Right ventricle myocardium inferior (tissue), 1 donor: ENCODE measurements at regions of chr14 and their contacts with region 1.

Region 1: DNA sequence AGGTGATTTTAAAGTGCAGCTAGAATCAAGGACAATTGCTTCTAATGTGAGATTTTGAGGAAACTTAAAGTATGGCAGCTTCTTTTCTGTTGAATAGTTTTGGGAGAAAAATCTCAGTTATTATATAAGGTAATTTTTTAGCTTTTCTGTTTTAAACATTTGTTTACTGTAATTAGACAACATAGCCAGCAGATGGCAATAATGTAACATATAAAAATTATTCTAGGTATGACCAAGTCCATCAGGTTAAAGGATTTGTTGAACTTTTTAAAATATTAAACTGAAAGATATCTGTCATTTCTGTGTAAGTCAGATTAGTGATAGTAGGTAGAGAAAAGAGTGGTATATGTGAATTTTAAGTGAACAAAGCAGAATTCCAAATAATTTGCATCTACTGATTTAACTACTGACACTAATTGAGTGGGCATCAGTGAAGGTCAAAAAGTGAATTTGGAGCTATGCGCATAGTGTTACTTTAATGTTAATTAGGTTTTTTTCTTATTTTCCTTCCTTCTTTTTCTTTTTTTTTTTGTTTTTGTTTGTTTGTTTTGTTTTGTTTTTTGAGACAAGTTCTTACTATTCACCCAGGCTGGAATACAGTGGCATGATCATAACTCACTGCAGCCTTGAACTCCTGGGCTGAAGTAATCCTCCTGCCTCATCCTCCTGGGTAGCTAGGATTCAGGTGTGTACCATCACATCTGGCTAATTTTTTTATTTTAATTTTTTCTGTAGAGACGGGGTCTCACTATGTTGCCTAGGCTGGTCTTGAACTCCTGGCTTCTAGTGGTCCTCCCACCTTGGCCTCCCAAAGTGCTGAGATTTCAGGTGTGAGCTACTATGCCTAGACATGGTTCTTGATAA is 18.6 kb downstream of the PRORP start:
- DNase-seq: no peak
- ATAC-seq: no peak

Region 2: DNA sequence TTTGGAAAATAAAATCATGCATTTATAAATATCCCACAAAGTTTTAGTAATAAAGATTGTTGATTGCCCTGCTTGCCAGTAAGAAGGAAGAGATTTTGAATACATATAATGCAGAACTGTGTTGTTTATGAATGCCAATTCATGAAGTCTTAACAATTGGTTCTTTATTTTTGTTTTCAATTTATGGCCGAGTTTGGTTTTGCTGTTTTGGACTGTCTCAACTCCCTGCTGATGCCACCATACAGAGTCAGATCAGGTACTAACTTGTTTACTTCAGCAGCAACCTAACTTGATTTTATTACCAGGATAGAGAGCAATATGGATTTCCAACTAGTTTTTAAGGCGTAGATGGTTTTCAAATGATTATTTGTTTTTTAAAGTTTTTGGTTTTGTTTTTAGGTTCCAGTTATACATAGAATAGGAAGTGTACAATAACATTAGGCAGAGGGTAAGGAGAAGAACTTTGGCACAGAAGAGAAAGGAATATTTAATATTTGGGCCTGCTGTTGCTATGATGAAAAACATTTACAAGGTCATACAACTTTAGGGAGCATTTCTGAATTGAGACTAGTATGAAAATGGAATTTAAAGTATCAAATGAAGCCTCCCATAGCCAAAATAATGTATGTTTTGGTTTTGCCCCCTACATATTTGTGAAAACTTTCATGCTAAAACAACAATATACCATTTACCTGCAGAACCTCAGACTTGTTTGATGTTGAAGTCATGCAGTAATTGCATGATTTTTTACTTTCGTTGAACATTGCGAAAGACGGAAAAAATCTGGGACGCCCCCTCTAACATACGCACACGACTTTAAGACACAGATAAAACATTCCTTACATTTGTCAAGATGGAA is 95.8 kb before region 1 on chr14:
- intact Hi-C with region 1: no loop called
- DNase-seq: no peak
- ATAC-seq: no peak

Region 3: GRCh38 chr14:35215110-35215876 is 74.3 kb after region 1 on chr14:
- intact Hi-C with region 1: loop called (anchors 10 kb)
- DNase-seq: no peak
- ATAC-seq: no peak

Region 4: GRCh38 chr14:35533357-35534207 is 392.6 kb after region 1 on chr14 and contains the start of gene INSM2:
- intact Hi-C with region 1: no loop called
- DNase-seq: peak; percentile 68
- ATAC-seq: peak; percentile 61
- total RNA-seq, gene INSM2: not detected